PC-9 (cell line): ENCODE measurements at regions of chr19 and their contacts with region 1.

Region 1: GRCh38 chr19:1039646-1040475 is at the start of gene ABCA7:
- DNase-seq: peak; percentile 92 to 99
- H3K4me3 ChIP-seq: peak within 1 kb of the TSS; percentile 72
- H3K27ac ChIP-seq: no peak within 1 kb of the TSS
- H3K4me1 ChIP-seq: peaks cover 10% of the 10 kb centered on the region; the same call in 1 of the 2 replicates
- H3K27me3 ChIP-seq: no peaks in the 10 kb centered on the region
- CTCF ChIP-seq: no peak
- total RNA-seq, gene ABCA7: 29.9 and 32.0 TPM in 2 replicates

Region 2: GRCh38 chr19:1057176-1057855 is 17.5 kb after region 1 on chr19:
- CTCF ChIA-PET with region 1: no interaction called
- POLR2A ChIA-PET with region 1: interaction called, 14 read pairs
- intact Hi-C with region 1: no loop called
- DNase-seq: peak in 1 of 2 experiments; percentile 43
- H3K4me3 ChIP-seq: no peak overlapping the region
- H3K27ac ChIP-seq: no peak overlapping the region
- H3K4me1 ChIP-seq: no peaks in the 10 kb centered on the region
- H3K27me3 ChIP-seq: no peaks in the 10 kb centered on the region
- CTCF ChIP-seq: peak; percentile 61

Region 3: GRCh38 chr19:1094975-1095701 is 55.3 kb after region 1 on chr19 and contains the start of gene POLR2E:
- CTCF ChIA-PET with region 1: no interaction called
- POLR2A ChIA-PET with region 1: interaction called, 22 read pairs
- intact Hi-C with region 1: no loop called
- DNase-seq: peak; percentile 90 to 97
- H3K4me3 ChIP-seq: peak within 1 kb of the TSS; percentile 96
- H3K27ac ChIP-seq: no peak within 1 kb of the TSS
- H3K4me1 ChIP-seq: peaks cover 34% of the 10 kb centered on the region
- H3K27me3 ChIP-seq: no peaks in the 10 kb centered on the region
- CTCF ChIP-seq: no peak
- total RNA-seq, gene POLR2E: 180 and 237 TPM in 2 replicates

Region 4: GRCh38 chr19:1125601-1126453 is 86.0 kb after region 1 on chr19:
- CTCF ChIA-PET with region 1: no interaction called
- POLR2A ChIA-PET with region 1: interaction called, 11 read pairs
- intact Hi-C with region 1: no loop called
- DNase-seq: peak in 1 of 2 experiments; percentile 77
- H3K4me3 ChIP-seq: no peak overlapping the region
- H3K27ac ChIP-seq: no peak overlapping the region
- H3K4me1 ChIP-seq: no peaks in the 10 kb centered on the region
- H3K27me3 ChIP-seq: no peaks in the 10 kb centered on the region
- CTCF ChIP-seq: no peak